Natural killer cell (primary cell): ENCODE measurements at regions of chrX and their contacts with region 1.

Region 1: DNA sequence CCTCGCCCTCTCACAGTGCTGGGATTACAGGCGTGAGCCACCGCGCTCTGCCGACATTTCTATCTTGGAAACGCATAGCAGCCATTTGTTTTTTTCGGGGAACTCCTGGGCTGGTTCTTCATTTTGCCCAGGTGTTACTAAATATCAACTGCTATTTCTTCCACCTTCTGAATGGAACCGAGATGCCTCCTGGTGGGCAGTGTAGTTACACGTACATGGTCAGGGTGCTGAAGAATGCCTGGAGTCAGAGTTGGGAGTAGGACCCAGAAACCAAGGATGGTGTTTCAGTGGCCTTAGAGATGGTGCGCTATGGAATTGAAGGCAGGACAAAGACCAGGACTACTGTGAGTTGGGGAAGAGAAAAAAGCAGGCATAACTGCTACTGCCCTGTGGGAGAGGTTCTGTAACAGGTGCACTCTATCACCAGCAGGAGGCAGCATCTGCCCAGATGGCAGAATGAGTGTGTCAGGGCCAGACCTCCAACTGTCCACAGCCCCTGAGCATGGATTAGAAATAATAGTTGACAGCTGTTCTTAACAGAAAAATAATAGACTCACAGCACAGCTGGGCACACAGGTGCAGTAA is 81.7 kb downstream of the ZC4H2 start:
- DNase-seq: peak in 1 of 2 donors; percentile 49
- ATAC-seq: peak in 1 of 3 donors; percentile 34
- H3K4me3 ChIP-seq: no peak overlapping the region
- H3K4me3 Mint-ChIP-seq: no peak overlapping the region
- H3K27ac ChIP-seq: no peak overlapping the region
- H3K27ac Mint-ChIP-seq: no peak overlapping the region
- H3K4me1 ChIP-seq: no peaks in the 10 kb centered on the region
- H3K4me1 Mint-ChIP-seq: no peaks in the 10 kb centered on the region
- H3K27me3 ChIP-seq: no peaks in the 10 kb centered on the region
- H3K27me3 Mint-ChIP-seq: no peaks in the 10 kb centered on the region
- CTCF ChIP-seq: no peak

Region 2: DNA sequence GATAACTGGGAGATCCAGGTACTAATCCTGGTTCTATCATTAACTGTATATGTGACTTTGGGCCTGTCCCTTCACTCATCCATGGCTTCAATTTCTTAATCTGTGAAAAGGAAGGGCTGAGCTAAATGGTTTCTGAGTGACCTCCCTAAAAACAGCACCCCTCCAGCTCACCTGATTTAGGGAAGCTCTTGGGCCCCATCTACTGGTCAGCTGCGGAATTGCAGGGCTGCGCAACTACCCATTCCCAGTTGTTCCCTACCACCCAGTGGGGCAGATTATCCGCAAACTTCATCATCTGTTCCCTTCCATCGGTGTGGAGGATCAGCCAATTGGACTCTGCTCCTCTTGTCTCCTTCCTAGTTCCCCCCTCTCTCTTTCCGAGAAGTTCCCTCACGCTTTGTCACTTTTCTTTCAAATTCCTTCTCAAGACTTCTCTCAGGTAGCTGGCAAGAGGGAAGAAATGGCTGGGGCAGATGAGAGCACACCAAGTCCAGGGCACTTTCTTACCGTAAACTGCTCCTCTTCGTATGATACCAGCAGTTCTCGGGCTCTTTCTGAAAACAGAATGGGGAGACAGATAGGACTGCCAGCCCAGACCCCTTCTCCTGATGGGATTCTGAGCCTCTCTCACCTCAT is 634.3 kb after region 1 on chrX:
- intact Hi-C with region 1: loop called (anchors 10 kb)
- DNase-seq: peak; percentile 42 to 70
- ATAC-seq: peak; percentile 54 to 84 (median 82)
- H3K4me3 ChIP-seq: no peak overlapping the region
- H3K4me3 Mint-ChIP-seq: no peak overlapping the region
- H3K27ac ChIP-seq: no peak overlapping the region
- H3K27ac Mint-ChIP-seq: no peak overlapping the region
- H3K4me1 ChIP-seq: peaks cover 6% of the 10 kb centered on the region
- H3K4me1 Mint-ChIP-seq: peaks cover 13 to 15% of the 10 kb centered on the region in 2 donors
- H3K27me3 ChIP-seq: no peaks in the 10 kb centered on the region
- H3K27me3 Mint-ChIP-seq: no peaks in the 10 kb centered on the region
- CTCF ChIP-seq: peak; percentile 86